CD8-positive, alpha-beta memory T cell (primary cell): ENCODE measurements at regions of chr2 and their contacts with region 1.

Region 1: DNA sequence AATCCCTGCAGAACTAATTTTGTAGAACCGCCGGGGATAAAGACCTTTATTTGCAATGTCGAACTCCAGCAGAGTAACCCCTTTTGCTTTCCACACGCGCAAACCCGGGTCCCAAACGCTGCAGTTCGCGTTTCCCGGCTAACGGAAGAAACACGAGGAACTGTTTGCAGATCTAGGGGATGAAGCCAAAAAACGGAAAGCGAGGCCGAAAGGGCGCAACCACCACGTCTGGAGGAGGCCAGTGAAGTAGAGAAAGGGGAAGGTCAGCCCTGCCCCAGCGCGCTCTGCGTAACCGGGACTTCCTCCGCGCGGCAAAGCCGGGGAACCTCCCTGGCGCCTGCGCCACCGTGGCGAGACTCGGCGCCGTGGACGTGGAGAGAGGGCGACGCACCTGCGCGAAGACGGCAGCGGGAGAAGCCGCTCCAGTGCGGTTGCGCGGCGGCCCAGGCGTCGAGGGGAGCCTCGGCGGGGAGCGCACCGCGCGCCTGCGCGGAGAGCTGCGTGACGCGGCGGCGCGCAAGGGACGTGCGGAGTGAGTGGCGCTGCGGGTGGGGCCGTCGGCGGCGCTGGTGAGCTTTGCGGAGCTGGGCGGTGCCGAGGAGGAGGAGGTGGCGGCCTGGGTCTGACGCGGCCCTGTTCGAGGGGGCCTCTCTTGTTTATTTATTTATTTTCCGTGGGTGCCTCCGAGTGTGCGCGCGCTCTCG is at the start of gene PPP1CB:
- DNase-seq: peak; percentile 95 to 99 (median 98)
- H3K4me3 ChIP-seq: peak within 1 kb of the TSS; percentile 95
- H3K4me3 Mint-ChIP-seq: peak within 1 kb of the TSS; percentile 91 to 99 (median 96)
- H3K27ac ChIP-seq: peak within 1 kb of the TSS; percentile 99
- H3K27ac Mint-ChIP-seq: peak within 1 kb of the TSS; percentile 93 to 100 (median 99)
- H3K4me1 ChIP-seq: peaks cover 60% of the 10 kb centered on the region
- H3K4me1 Mint-ChIP-seq: peaks cover 51 to 72% (median 70%) of the 10 kb centered on the region in 3 donors
- H3K27me3 ChIP-seq: no peaks in the 10 kb centered on the region
- H3K27me3 Mint-ChIP-seq: no peaks in the 10 kb centered on the region
- total RNA-seq, gene PPP1CB: 208 to 214 TPM

Region 2: GRCh38 chr2:28566521-28567041 is 184.8 kb before region 1 on chr2:
- CTCF ChIA-PET with region 1: interaction called, 14 read pairs
- POLR2A ChIA-PET with region 1: no interaction called
- DNase-seq: peak; percentile 83 to 90 (median 86)
- H3K4me3 ChIP-seq: peak overlapping the region; percentile 66
- H3K4me3 Mint-ChIP-seq: peak overlapping the region; percentile 91 to 97 (median 92)
- H3K27ac ChIP-seq: no peak overlapping the region
- H3K27ac Mint-ChIP-seq: peak overlapping the region; percentile 32 to 98 (median 92)
- H3K4me1 ChIP-seq: peaks cover 11% of the 10 kb centered on the region
- H3K4me1 Mint-ChIP-seq: peaks cover 15 to 21% (median 18%) of the 10 kb centered on the region in 3 donors
- H3K27me3 ChIP-seq: no peaks in the 10 kb centered on the region
- H3K27me3 Mint-ChIP-seq: peaks cover 1 to 3% of the 10 kb centered on the region in 2 donors

Region 3: DNA sequence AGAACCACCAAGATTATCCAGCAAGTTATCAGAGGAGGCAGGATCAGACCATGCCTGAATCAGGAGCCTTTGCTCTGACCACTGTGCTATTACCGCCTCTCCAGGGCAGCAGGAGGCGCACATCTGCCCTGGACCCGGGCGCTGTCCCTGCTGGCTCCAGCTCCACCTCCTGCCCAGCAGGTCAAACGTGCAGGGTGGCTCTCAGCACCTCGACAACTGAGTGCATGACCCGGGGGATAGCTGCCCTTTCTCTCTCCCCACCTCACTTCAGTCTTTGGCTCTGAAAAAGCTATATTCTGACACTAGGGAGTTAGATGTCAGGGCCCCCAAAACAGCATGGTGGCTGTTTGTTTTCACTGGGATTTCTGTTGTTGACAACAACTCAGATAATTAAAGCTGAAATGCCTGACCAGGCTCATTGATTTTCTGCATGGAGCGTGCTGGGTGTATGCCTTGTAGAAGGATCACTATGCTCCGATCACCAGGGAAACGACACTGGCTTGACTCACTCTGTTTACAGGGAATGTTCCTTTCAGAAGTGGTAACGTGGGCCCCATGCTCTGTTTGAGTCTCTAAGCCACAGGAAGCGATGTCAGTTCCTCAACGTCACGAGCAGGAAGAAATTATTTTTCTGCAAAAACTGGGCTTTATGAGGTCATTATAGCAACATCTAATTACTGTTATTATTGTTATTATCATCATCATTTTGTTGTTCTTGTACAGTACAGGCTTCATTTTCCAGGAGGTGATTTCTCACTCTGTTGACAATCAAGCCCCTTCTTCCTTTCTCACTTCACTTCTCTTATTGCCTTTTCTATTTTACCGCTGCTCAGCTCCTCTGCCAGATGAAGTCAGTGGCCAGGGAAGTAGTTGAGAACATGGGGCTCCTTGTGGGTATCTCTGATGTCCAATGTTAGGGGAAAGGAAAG is 130.0 kb before region 1 on chr2:
- CTCF ChIA-PET with region 1: interaction called, 16 read pairs
- POLR2A ChIA-PET with region 1: interaction called, 7 read pairs
- DNase-seq: peak; percentile 59 to 93 (median 90)
- H3K4me3 ChIP-seq: peak overlapping the region; percentile 53
- H3K4me3 Mint-ChIP-seq: peak overlapping the region; percentile 25 to 90 (median 73)
- H3K27ac ChIP-seq: peak overlapping the region; percentile 95
- H3K27ac Mint-ChIP-seq: peak overlapping the region; percentile 96 to 100 (median 99)
- H3K4me1 ChIP-seq: peaks cover 92% of the 10 kb centered on the region
- H3K4me1 Mint-ChIP-seq: peaks cover 73 to 95% (median 77%) of the 10 kb centered on the region in 3 donors
- H3K27me3 ChIP-seq: no peaks in the 10 kb centered on the region
- H3K27me3 Mint-ChIP-seq: no peaks in the 10 kb centered on the region

Region 4: DNA sequence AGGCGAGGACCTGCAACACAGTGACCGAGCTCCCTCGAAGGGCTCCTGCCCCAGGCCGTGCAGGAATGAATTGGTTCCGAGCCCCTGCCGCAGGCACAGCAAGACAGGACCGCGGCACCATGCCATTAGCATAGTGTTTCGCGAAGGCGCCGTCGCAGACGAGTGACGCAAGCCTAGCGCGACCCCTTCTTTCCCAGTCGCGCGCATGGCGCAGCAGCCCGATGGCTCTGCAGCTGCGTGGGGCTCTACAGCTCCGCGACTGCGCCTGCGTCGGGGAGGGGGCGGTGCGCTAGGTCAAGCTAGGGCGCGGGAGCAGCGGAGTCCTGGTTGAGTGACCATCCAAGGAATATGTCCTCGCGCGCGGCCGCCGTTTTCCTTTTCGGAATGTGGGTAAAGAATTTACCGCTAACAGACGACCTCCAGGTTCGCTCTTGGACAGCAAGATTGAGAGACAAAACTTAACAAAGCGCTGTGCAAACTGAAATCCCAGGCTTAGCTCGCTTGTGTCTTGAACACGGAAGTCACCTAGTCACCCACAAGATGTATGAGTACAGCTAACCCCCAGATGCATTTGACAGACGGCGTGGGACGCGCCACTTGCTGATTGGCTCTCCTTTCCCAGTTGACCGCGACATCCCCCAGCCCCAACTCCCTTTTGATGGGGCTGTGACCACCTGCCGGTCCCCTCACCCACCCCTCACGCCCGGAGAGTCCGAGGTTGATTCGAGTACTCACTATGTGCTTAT is 118.9 kb after region 1 on chr2 and contains the start of gene TRMT61B:
- CTCF ChIA-PET with region 1: no interaction called
- POLR2A ChIA-PET with region 1: interaction called, 11 read pairs
- DNase-seq: peak; percentile 94 to 97 (median 95)
- H3K4me3 ChIP-seq: peak within 1 kb of the TSS; percentile 100
- H3K4me3 Mint-ChIP-seq: peak within 1 kb of the TSS; percentile 94 to 100 (median 97)
- H3K27ac ChIP-seq: peak within 1 kb of the TSS; percentile 96
- H3K27ac Mint-ChIP-seq: peak within 1 kb of the TSS; percentile 98 to 100 (median 100)
- H3K4me1 ChIP-seq: peaks cover 34% of the 10 kb centered on the region
- H3K4me1 Mint-ChIP-seq: peaks cover 41 to 44% (median 42%) of the 10 kb centered on the region in 3 donors
- H3K27me3 ChIP-seq: peaks cover under 1% of the 10 kb centered on the region
- H3K27me3 Mint-ChIP-seq: peaks cover 3% of the 10 kb centered on the region in 2 donors
- total RNA-seq, gene TRMT61B: 18.3 to 20.2 TPM